ENCODE measurements at regions of chr20 and their contacts with region 1.

Region 1: GRCh38 chr20:47493175-47493962 is 8.3 kb upstream of the NCOA3 start:
- DNase-seq: peak; percentile 97
- H3K4me3 ChIP-seq: peak overlapping the region in 2 of 4 donors; percentile 16 to 36
- H3K27ac ChIP-seq: peak overlapping the region; percentile 71 to 84 (median 78)
- H3K4me1 ChIP-seq: peaks cover 20 to 22% (median 21%) of the 10 kb centered on the region in 4 donors
- H3K27me3 ChIP-seq: no peaks in the 10 kb centered on the region
- CTCF ChIP-seq: no peak
- EP300 ChIP-seq: no peak
- POLR2A ChIP-seq: no peak

Region 2: GRCh38 chr20:47258745-47259695 is 234.3 kb before region 1 on chr20:
- intact Hi-C with region 1: loop called (anchors 10 kb)
- DNase-seq: no peak
- H3K4me3 ChIP-seq: no peak overlapping the region
- H3K27ac ChIP-seq: peak overlapping the region; percentile 35 to 70 (median 52)
- H3K4me1 ChIP-seq: peaks cover 36 to 56% (median 44%) of the 10 kb centered on the region in 4 donors
- H3K27me3 ChIP-seq: no peaks in the 10 kb centered on the region
- CTCF ChIP-seq: no peak
- EP300 ChIP-seq: no peak
- POLR2A ChIP-seq: no peak

Region 3: DNA sequence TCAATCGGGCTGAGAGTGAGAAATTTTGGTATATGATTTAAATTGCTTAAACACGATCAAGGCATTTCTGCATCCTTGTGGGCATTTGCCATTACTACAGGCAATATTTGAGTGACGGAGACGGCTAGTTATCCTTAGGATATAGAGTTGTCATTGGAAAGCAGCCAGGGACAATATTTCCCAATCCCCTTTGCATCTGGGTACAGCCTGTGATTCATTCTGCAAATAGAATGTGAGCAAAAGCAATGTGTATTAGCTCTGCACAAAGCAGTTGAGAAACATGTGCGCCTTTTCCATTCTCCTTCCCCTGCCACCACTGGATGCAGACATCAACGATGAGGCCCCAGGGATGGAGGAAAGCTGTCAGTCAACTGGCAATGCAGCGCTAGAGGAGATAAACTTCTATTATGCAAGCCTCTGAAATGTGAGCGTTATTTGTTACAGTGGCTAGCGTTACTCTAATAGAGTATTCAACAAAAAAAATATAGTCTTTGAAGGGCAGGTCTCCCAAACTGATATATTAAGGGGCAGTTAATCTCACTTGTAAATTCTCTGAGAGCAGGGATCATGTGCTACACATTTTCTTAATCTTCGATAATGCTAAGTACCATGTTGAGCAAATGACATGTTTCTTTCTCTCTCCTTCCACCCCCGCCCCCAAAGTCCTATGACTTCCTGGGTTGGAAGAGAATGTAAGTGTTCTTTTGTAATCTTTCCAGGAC is 28.8 kb before region 1 on chr20:
- intact Hi-C with region 1: loop called (anchors 1 kb)
- DNase-seq: no peak
- H3K4me3 ChIP-seq: no peak overlapping the region
- H3K27ac ChIP-seq: peak overlapping the region in 3 of 4 donors; percentile 9 to 35 (median 16)
- H3K4me1 ChIP-seq: peaks cover 9 to 16% (median 13%) of the 10 kb centered on the region in 4 donors
- H3K27me3 ChIP-seq: no peaks in the 10 kb centered on the region
- CTCF ChIP-seq: peak; percentile 9 to 16 (median 13)
- EP300 ChIP-seq: no peak
- POLR2A ChIP-seq: no peak

Region 4: GRCh38 chr20:47535088-47535487 is 41.7 kb after region 1 on chr20:
- intact Hi-C with region 1: no loop called
- DNase-seq: no peak
- H3K4me3 ChIP-seq: no peak overlapping the region
- H3K27ac ChIP-seq: no peak overlapping the region
- H3K4me1 ChIP-seq: peaks cover 6 to 28% (median 11%) of the 10 kb centered on the region in 4 donors
- H3K27me3 ChIP-seq: no peaks in the 10 kb centered on the region
- CTCF ChIP-seq: no peak
- EP300 ChIP-seq: no peak
- POLR2A ChIP-seq: no peak

Measured in esophagus muscularis mucosa (tissue), 4 donors.